ENCODE measurements at regions of chr3 and their contacts with region 1.

Region 1: DNA sequence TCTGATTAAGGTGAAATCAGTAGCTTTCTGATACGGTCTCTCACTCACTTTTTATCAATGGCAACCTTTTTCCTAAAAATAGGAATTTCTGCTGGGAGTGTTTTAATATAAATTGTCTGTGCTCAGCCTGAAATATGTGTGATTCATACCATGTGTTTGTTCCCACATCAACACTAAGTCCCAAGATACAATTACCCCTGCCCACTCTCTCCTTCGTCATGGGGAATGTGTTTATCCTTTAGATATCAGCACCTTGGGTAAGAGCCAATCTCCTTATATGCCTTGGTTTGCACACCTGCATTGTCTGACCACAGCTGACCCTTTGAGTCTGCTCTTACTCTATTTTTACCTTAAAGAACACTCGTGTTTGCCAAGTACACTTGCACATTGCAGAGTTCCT is 356.4 kb downstream of the LPP start:
- DNase-seq: peak; percentile 52
- H3K4me3 ChIP-seq: no peak overlapping the region
- H3K27ac ChIP-seq: peak overlapping the region; percentile 85
- H3K4me1 ChIP-seq: peaks cover 54% of the 10 kb centered on the region
- H3K27me3 ChIP-seq: no peaks in the 10 kb centered on the region
- CTCF ChIP-seq: no peak

Region 2: GRCh38 chr3:188154014-188154808 is 356.2 kb before region 1 on chr3 and contains the start of gene LPP:
- CTCF ChIA-PET with region 1: interaction called, 3 read pairs
- POLR2A ChIA-PET with region 1: no interaction called
- intact Hi-C with region 1: loop called (anchors 10 kb)
- DNase-seq: peak; percentile 78
- H3K4me3 ChIP-seq: peak within 1 kb of the TSS; percentile 64
- H3K27ac ChIP-seq: peak within 1 kb of the TSS; percentile 92
- H3K4me1 ChIP-seq: peaks cover 13% of the 10 kb centered on the region
- H3K27me3 ChIP-seq: no peaks in the 10 kb centered on the region
- CTCF ChIP-seq: no peak
- total RNA-seq, gene LPP: 39.7 and 40.6 TPM in 2 replicates

Region 3: GRCh38 chr3:188229177-188229576 is 281.2 kb before region 1 on chr3:
- CTCF ChIA-PET with region 1: interaction called, 10 read pairs
- POLR2A ChIA-PET with region 1: no interaction called
- intact Hi-C with region 1: no loop called
- DNase-seq: peak; percentile 85
- H3K4me3 ChIP-seq: no peak overlapping the region
- H3K27ac ChIP-seq: peak overlapping the region; percentile 56
- H3K4me1 ChIP-seq: peaks cover 22% of the 10 kb centered on the region
- H3K27me3 ChIP-seq: no peaks in the 10 kb centered on the region
- CTCF ChIP-seq: no peak

Measured in A673 (cell line).